Posterior cingulate gyrus (tissue), 11 donors: ENCODE measurements at regions of chr9 and their contacts with region 1.

Region 1: GRCh38 chr9:37676411-37676830 is 25.7 kb downstream of the FRMPD1 start:
- DNase-seq: peak; percentile 21 to 88 (median 54)

Region 2: GRCh38 chr9:37617832-37618231 is 58.6 kb before region 1 on chr9:
- intact Hi-C with region 1: loop called (anchors 10 kb)
- DNase-seq: no peak

Region 3: DNA sequence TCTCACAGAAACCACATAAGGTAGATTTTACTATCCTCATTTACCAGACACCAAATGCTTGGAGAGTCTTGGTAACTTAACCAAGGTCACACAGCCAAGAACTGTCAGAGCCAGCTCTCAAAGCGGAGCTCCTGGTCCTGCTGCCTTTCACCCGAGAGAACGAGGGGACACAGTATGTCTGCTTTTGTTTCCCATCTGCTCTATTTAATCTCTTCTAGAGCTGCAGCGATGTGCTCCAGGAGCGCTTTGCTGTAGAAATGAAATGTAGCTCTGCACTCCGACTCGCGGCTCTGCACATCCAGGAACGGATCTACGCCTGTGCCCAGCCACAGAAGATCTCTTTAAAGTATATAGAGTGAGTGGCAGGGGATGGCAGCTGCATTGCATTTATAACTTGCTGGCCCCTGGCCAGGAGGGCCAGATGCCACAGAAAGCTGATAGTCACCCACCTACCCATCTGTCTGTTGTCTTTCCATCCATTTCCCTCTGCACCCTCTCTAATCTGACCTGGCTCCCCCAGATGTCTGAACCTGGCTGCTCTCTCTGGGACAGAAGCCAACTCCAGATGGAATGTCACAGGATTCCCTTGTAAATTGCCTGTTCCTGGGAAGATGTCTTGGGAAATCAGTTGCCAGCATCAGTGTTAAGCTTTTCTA is 55.8 kb after region 1 on chr9:
- intact Hi-C with region 1: loop called (anchors 10 kb)
- DNase-seq: peak in 3 of 10 donors; percentile 19 to 52 (median 23)